T-cell (primary cell): ENCODE measurements at regions of chr2 and their contacts with region 1.

Region 1: DNA sequence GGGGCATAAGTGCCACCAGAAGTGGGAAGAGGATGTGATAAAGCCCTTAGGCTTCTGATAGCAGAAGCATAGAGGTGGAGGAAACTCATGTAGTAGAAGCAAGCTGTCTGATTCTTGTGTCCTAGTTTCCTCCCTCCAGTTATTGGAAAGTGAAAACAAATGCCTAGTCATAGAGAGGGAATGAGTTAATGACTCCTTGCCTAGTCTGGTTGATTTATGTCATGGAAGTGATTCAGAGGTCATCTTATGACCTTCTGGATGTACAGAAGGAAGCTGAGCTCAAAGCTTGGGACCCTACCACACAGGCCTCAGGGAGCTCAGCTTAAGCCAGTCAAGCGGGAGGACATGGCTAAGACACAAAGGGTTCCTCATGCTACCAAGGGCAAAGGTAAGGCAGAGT is 232.2 kb downstream of the THSD7B start:
- DNase-seq: no peak
- ATAC-seq: no peak
- H3K4me3 ChIP-seq: no peak overlapping the region
- H3K4me3 Mint-ChIP-seq: no peak overlapping the region
- H3K27ac ChIP-seq: no peak overlapping the region
- H3K27ac Mint-ChIP-seq: no peak overlapping the region
- H3K4me1 ChIP-seq: no peaks in the 10 kb centered on the region
- H3K4me1 Mint-ChIP-seq: no peaks in the 10 kb centered on the region
- H3K27me3 ChIP-seq: no peaks in the 10 kb centered on the region
- H3K27me3 Mint-ChIP-seq: peaks cover 0 to 4% of the 10 kb centered on the region in 2 donors

Region 2: GRCh38 chr2:136957044-136957443 is 40.5 kb before region 1 on chr2:
- CTCF ChIA-PET with region 1: no interaction called
- POLR2A ChIA-PET with region 1: no interaction called
- DNase-seq: no peak
- ATAC-seq: no peak
- H3K4me3 ChIP-seq: no peak overlapping the region
- H3K4me3 Mint-ChIP-seq: no peak overlapping the region
- H3K27ac ChIP-seq: no peak overlapping the region
- H3K27ac Mint-ChIP-seq: no peak overlapping the region
- H3K4me1 ChIP-seq: no peaks in the 10 kb centered on the region
- H3K4me1 Mint-ChIP-seq: no peaks in the 10 kb centered on the region
- H3K27me3 ChIP-seq: peaks cover 0 to 3% of the 10 kb centered on the region in 2 experiments
- H3K27me3 Mint-ChIP-seq: peaks cover 0 to 4% of the 10 kb centered on the region in 2 donors

Region 3: GRCh38 chr2:136985044-136985443 is 12.5 kb before region 1 on chr2:
- CTCF ChIA-PET with region 1: no interaction called
- POLR2A ChIA-PET with region 1: no interaction called
- DNase-seq: no peak
- ATAC-seq: no peak
- H3K4me3 ChIP-seq: no peak overlapping the region
- H3K4me3 Mint-ChIP-seq: no peak overlapping the region
- H3K27ac ChIP-seq: no peak overlapping the region
- H3K27ac Mint-ChIP-seq: no peak overlapping the region
- H3K4me1 ChIP-seq: no peaks in the 10 kb centered on the region
- H3K4me1 Mint-ChIP-seq: no peaks in the 10 kb centered on the region
- H3K27me3 ChIP-seq: peaks cover 0 to 2% of the 10 kb centered on the region in 2 experiments
- H3K27me3 Mint-ChIP-seq: peaks cover 0 to 1% of the 10 kb centered on the region in 2 donors

Region 4: GRCh38 chr2:137023205-137023604 is 25.6 kb after region 1 on chr2:
- CTCF ChIA-PET with region 1: no interaction called
- POLR2A ChIA-PET with region 1: no interaction called
- DNase-seq: no peak
- ATAC-seq: no peak
- H3K4me3 ChIP-seq: no peak overlapping the region
- H3K4me3 Mint-ChIP-seq: no peak overlapping the region
- H3K27ac ChIP-seq: no peak overlapping the region
- H3K27ac Mint-ChIP-seq: no peak overlapping the region
- H3K4me1 ChIP-seq: no peaks in the 10 kb centered on the region
- H3K4me1 Mint-ChIP-seq: no peaks in the 10 kb centered on the region
- H3K27me3 ChIP-seq: no peaks in the 10 kb centered on the region
- H3K27me3 Mint-ChIP-seq: peaks cover 0 to 4% of the 10 kb centered on the region in 2 donors

Region 5: GRCh38 chr2:137091704-137092103 is 94.1 kb after region 1 on chr2:
- CTCF ChIA-PET with region 1: no interaction called
- POLR2A ChIA-PET with region 1: interaction called in 1 of 2 experiments, 11 read pairs
- DNase-seq: no peak
- ATAC-seq: no peak
- H3K4me3 ChIP-seq: no peak overlapping the region
- H3K4me3 Mint-ChIP-seq: no peak overlapping the region
- H3K27ac ChIP-seq: no peak overlapping the region
- H3K27ac Mint-ChIP-seq: no peak overlapping the region
- H3K4me1 ChIP-seq: no peaks in the 10 kb centered on the region
- H3K4me1 Mint-ChIP-seq: no peaks in the 10 kb centered on the region
- H3K27me3 ChIP-seq: no peaks in the 10 kb centered on the region
- H3K27me3 Mint-ChIP-seq: no peaks in the 10 kb centered on the region